ENCODE measurements at regions of chr1 and their contacts with region 1.

Region 1: DNA sequence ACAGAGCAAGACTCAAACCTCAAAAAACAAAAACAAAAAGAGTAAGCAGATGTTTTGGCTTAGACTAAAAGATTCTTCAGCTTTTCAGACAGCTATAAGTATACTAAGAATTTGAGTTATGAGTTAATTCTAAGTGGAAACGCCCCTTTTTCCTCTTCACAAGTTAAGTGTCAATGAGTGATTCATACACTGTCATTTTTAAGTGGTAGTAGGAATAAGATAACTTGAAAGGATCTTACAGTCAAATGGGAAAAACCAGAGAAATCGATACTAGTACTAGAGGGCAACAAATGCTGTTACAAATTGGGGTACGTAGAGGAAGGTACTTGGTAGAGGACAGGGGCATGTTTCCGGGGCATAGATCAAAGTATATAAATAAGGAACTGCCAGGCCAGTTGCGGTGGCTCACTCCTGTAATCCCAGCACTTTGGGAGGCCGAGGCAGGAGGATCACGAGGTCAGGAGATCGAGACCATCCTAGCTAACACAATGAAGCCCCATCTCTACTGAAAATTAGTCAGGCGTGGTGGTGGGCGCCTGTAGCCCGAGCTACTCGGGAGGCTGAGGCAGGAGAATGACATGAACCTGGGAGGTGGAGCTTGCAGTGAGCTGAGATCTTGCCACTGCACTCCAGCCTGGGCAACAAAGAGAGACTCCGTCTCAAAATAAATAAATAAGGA is 7.4 kb downstream of the H3-3A start:
- DNase-seq: peak; percentile 27
- H3K4me3 Mint-ChIP-seq: peak overlapping the region; percentile 1
- H3K27ac Mint-ChIP-seq: peak overlapping the region; percentile 78
- H3K4me1 Mint-ChIP-seq: peaks cover 61% of the 10 kb centered on the region
- H3K27me3 Mint-ChIP-seq: no peaks in the 10 kb centered on the region

Region 2: GRCh38 chr1:226109829-226110248 is 39.9 kb after region 1 on chr1:
- CTCF ChIA-PET with region 1: interaction called, 38 read pairs
- POLR2A ChIA-PET with region 1: interaction called, 13 read pairs
- intact Hi-C with region 1: no loop called
- DNase-seq: peak; percentile 89
- H3K4me3 Mint-ChIP-seq: peak overlapping the region; percentile 76
- H3K27ac Mint-ChIP-seq: peak overlapping the region; percentile 79
- H3K4me1 Mint-ChIP-seq: peaks cover 15% of the 10 kb centered on the region
- H3K27me3 Mint-ChIP-seq: no peaks in the 10 kb centered on the region

Region 3: GRCh38 chr1:226223786-226224244 is 153.9 kb after region 1 on chr1:
- CTCF ChIA-PET with region 1: no interaction called
- POLR2A ChIA-PET with region 1: no interaction called
- intact Hi-C with region 1: no loop called
- DNase-seq: peak; percentile 24
- H3K4me3 Mint-ChIP-seq: peak overlapping the region; percentile 69
- H3K27ac Mint-ChIP-seq: no peak overlapping the region
- H3K4me1 Mint-ChIP-seq: peaks cover 6% of the 10 kb centered on the region
- H3K27me3 Mint-ChIP-seq: peaks cover 36% of the 10 kb centered on the region